Ascending aorta (tissue), 2 donors: ENCODE measurements at regions of chrX and their contacts with region 1.

Region 1: GRCh38 chrX:150772150-150772970 is 79.2 kb downstream of the MTMR1 start:
- DNase-seq: peak in 1 of 2 donors; percentile 81
- H3K4me3 ChIP-seq: no peak overlapping the region
- H3K27ac ChIP-seq: no peak overlapping the region
- H3K4me1 ChIP-seq: no peaks in the 10 kb centered on the region
- H3K27me3 ChIP-seq: no peaks in the 10 kb centered on the region
- CTCF ChIP-seq: peak; percentile 71 to 80 (median 77)

Region 2: DNA sequence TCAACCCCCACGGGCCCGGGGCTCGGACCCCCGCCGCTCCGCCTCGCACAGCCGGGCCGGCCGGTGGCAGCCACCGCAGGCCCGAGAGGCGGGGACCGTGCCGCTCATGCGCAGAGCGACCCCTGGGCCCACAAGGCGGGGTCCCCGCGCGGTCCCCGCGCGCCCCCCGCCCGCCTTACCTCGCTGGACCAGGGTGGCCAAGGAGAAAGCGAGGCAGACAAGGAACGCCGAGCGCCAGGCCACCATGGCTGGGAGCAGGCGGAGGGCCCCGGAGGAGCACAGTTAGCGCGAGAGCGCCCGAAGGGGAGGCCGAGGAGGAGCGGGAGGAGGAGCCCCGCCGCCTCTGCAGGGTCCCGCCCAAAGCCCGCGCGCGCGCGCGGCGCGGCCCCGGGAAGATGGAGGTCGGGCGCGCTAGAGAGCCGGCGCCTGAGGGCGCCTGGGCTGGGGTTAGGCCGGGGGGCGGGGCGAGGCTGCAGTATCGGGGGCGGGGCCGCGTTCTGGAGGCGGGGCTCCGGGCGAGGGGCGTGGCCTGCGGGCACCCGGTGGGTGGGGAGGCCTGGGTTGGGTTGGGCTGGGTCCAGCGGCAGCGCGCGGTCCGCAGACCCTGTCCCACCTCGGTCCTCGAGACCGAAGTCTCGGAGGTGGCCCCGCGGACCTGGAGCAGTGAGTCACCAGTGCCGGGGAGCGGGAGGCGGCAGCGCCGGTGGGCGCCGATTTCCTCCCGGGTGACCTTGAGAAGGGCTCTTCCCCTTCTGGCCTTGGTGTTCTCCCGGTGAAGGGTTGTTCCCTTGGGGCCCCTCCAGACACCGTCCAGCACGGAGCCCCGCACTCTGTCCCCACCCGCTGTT is 126.2 kb after region 1 on chrX and contains the start of gene CD99L2:
- intact Hi-C with region 1: no loop called
- DNase-seq: peak; percentile 39 to 91
- H3K4me3 ChIP-seq: peak within 1 kb of the TSS; percentile 71 to 83
- H3K27ac ChIP-seq: peak within 1 kb of the TSS; percentile 65 to 71
- H3K4me1 ChIP-seq: no peaks in the 10 kb centered on the region
- H3K27me3 ChIP-seq: no peaks in the 10 kb centered on the region
- CTCF ChIP-seq: no peak
- total RNA-seq, gene CD99L2: 83.4 TPM

Region 3: GRCh38 chrX:150982788-150983520 is 210.6 kb after region 1 on chrX and contains the start of gene HMGB3:
- intact Hi-C with region 1: loop called (anchors 2 kb)
- DNase-seq: peak; percentile 68 to 91
- H3K4me3 ChIP-seq: peak within 1 kb of the TSS; percentile 65 to 74
- H3K27ac ChIP-seq: no peak within 1 kb of the TSS
- H3K4me1 ChIP-seq: peaks cover 0 to 2% of the 10 kb centered on the region in 2 donors
- H3K27me3 ChIP-seq: no peaks in the 10 kb centered on the region
- CTCF ChIP-seq: no peak
- total RNA-seq, gene HMGB3: 0.21 TPM

Region 4: DNA sequence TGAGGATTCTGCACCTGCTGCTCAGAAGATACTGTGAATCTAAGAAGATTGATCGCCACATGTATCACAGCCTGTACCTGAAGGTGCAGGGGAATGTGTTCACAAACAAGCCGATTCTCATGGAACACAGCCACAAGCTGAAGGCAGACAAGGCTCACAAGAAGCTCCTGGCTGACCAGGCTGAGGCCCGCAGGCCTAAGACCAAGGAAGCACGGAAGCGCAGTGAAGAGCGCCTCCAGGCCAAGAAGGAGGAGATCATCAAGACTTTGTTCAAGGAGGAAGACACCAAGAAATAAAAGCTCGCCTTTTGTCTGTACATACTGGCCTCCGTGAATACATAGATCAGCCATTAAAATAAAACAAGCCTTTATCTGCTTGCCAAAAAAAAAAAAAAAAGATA is 221.4 kb after region 1 on chrX:
- intact Hi-C with region 1: no loop called
- DNase-seq: no peak
- H3K4me3 ChIP-seq: no peak overlapping the region
- H3K27ac ChIP-seq: no peak overlapping the region
- H3K4me1 ChIP-seq: no peaks in the 10 kb centered on the region
- H3K27me3 ChIP-seq: no peaks in the 10 kb centered on the region
- CTCF ChIP-seq: no peak

Region 5: GRCh38 chrX:151082076-151082948 is 310.0 kb after region 1 on chrX:
- intact Hi-C with region 1: loop called (anchors 1 kb)
- DNase-seq: peak in 1 of 2 donors; percentile 79
- H3K4me3 ChIP-seq: peak overlapping the region; percentile 32 to 42
- H3K27ac ChIP-seq: no peak overlapping the region
- H3K4me1 ChIP-seq: no peaks in the 10 kb centered on the region
- H3K27me3 ChIP-seq: no peaks in the 10 kb centered on the region
- CTCF ChIP-seq: peak; percentile 75 to 94 (median 85)